CD8-positive, alpha-beta T cell (primary cell): ENCODE measurements at regions of chr2 and their contacts with region 1.

Region 1: DNA sequence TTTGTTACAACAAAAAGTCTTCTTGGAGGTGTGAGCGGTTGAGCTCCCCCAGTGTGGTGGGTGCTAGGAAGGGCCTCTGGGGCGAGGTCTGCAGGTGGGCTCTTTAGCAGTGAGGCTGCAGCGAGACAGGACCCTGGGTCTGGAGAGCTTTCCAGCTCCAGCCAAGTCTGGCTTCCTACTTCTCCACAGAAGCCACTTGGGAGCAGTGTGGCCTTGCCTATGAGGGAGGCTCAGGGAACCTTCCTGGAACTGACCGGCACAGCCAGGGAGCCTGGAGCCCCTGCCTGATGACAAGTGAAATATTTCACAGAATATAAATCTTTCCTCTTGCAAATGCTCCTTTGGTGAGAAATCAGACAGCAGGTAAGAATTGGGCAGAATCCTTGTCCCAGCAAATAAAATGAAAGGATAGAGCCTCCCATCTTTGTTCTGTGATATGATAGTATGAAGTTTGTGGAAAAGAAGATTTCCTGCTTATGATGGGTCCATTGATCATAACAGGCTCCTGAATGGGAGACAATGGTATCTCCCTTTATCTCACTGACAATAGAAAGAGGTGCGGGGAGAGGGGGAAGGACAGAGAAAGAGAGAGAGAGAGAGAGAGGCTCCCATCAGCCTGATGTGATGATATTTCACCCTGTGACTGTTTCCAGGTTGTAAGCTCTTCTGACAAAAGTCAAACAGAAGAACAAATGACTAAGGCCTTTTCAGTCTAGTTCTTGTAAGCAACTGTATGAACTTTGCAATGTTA is 289.8 kb upstream of the SPRED2 start:
- DNase-seq: no peak
- ATAC-seq: no peak
- H3K4me3 ChIP-seq: no peak overlapping the region
- H3K4me3 Mint-ChIP-seq: no peak overlapping the region
- H3K27ac ChIP-seq: no peak overlapping the region
- H3K27ac Mint-ChIP-seq: no peak overlapping the region
- H3K4me1 ChIP-seq: no peaks in the 10 kb centered on the region
- H3K4me1 Mint-ChIP-seq: no peaks in the 10 kb centered on the region
- H3K27me3 ChIP-seq: peaks cover 0 to 3% of the 10 kb centered on the region in 2 experiments
- H3K27me3 Mint-ChIP-seq: peaks cover 6% of the 10 kb centered on the region
- CTCF ChIP-seq: no peak

Region 2: DNA sequence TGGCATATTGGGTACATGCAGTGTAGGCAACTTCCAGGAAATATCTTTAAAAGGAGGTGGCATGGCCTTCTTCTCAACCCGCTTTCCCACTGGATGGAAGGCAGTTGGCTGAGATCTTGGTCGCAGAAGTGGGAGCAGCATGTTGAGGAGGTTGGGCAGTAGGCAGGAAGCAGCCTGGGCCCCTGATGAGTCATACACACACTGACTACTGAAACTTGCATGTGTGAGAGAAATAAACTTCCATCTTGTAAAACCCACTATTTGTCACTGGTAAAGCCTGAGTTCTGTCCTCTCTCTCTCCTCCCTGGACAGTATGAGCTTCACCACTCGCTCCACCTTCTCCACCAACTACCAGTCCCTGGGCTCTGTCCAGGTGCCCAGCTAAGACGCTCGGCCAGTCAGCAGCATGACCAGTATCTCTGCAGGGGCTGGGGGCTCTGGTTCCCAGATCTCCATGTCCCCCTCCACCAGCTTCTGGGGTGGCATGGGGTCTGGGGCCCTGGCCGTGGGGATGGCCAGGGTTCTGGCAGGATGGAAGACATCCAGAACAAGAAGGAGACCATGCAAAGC is 56.0 kb before region 1 on chr2:
- CTCF ChIA-PET with region 1: no interaction called
- POLR2A ChIA-PET with region 1: no interaction called
- intact Hi-C with region 1: no loop called
- DNase-seq: no peak
- ATAC-seq: no peak
- H3K4me3 ChIP-seq: no peak overlapping the region
- H3K4me3 Mint-ChIP-seq: no peak overlapping the region
- H3K27ac ChIP-seq: no peak overlapping the region
- H3K27ac Mint-ChIP-seq: no peak overlapping the region
- H3K4me1 ChIP-seq: no peaks in the 10 kb centered on the region
- H3K4me1 Mint-ChIP-seq: no peaks in the 10 kb centered on the region
- H3K27me3 ChIP-seq: no peaks in the 10 kb centered on the region
- H3K27me3 Mint-ChIP-seq: peaks cover 14% of the 10 kb centered on the region
- CTCF ChIP-seq: no peak

Region 3: GRCh38 chr2:65710779-65711295 is 11.4 kb before region 1 on chr2:
- CTCF ChIA-PET with region 1: no interaction called
- POLR2A ChIA-PET with region 1: no interaction called
- intact Hi-C with region 1: no loop called
- DNase-seq: no peak
- ATAC-seq: no peak
- H3K4me3 ChIP-seq: no peak overlapping the region
- H3K4me3 Mint-ChIP-seq: no peak overlapping the region
- H3K27ac ChIP-seq: no peak overlapping the region
- H3K27ac Mint-ChIP-seq: no peak overlapping the region
- H3K4me1 ChIP-seq: no peaks in the 10 kb centered on the region
- H3K4me1 Mint-ChIP-seq: no peaks in the 10 kb centered on the region
- H3K27me3 ChIP-seq: peaks cover 0 to 7% of the 10 kb centered on the region in 2 experiments
- H3K27me3 Mint-ChIP-seq: peaks cover 6% of the 10 kb centered on the region
- CTCF ChIP-seq: no peak

Region 4: DNA sequence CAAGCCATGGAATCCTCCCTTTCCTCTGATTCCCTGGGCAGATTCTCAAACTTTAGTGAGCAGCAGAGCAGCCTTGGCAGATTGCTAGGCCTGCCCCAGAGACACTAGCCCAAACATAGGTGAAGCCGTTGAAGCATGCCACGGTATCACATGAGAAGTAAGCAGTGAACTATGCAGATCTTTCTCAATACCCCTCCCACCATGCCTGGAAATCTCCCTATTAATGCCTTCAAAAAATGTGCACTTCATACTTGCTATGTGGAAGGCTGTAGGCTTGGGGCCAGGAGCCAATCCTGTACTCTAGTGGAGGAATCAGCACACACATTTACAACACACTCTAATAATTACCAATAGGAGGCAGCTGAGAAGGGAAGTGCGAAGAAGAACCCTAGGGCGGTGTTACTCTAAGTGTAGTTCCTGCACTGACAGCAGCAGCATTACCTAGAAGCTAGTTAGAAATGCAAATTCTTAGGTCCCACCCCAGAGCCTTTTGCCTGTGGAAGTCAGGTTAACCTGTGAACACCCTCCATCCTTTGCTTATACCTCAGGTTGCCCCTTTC is 15.3 kb after region 1 on chr2:
- CTCF ChIA-PET with region 1: no interaction called
- POLR2A ChIA-PET with region 1: no interaction called
- intact Hi-C with region 1: loop called in 1 of 2 experiments (anchors 1 kb)
- DNase-seq: no peak
- ATAC-seq: no peak
- H3K4me3 ChIP-seq: no peak overlapping the region
- H3K4me3 Mint-ChIP-seq: no peak overlapping the region
- H3K27ac ChIP-seq: no peak overlapping the region
- H3K27ac Mint-ChIP-seq: no peak overlapping the region
- H3K4me1 ChIP-seq: no peaks in the 10 kb centered on the region
- H3K4me1 Mint-ChIP-seq: no peaks in the 10 kb centered on the region
- H3K27me3 ChIP-seq: no peaks in the 10 kb centered on the region
- H3K27me3 Mint-ChIP-seq: peaks cover 25% of the 10 kb centered on the region
- CTCF ChIP-seq: no peak